B cell (primary cell): ENCODE measurements at regions of chr1 and their contacts with region 1.

Region 1: DNA sequence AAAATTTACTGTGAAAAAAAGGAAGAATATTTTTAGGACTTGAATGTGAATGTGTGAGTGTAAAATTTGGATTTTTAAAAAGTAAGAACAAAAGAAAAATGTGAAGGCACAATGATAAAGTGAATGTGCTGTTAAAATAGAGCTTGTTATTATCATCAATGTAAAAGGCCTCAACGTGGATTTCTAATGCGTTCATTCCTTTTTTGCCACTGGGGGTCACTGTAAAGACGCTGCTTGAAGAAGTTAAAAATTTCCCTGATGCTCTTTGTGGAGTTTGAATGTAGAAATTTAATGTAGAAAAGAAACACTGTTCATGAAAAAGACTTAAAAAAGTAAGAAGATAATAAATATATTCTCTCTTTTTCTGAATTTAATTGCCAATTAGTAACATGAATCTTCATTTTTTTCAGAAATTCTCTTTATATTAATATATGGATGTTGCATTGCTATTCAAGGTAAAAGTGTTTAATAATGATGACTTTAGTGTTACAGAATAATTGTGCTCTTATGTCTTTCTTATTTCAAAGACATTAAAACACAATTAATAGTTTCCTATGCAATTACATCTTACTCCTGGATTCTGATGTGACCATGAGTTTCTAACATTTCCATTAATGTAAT is 161.5 kb downstream of the DNM3 start:
- DNase-seq: peak; percentile 66
- ATAC-seq: peak; percentile 41
- H3K4me3 ChIP-seq: no peak overlapping the region
- H3K4me3 Mint-ChIP-seq: no peak overlapping the region
- H3K27ac ChIP-seq: no peak overlapping the region
- H3K27ac Mint-ChIP-seq: no peak overlapping the region
- H3K4me1 ChIP-seq: no peaks in the 10 kb centered on the region
- H3K4me1 Mint-ChIP-seq: no peaks in the 10 kb centered on the region
- H3K27me3 ChIP-seq: no peaks in the 10 kb centered on the region
- H3K27me3 Mint-ChIP-seq: no peaks in the 10 kb centered on the region
- CTCF ChIP-seq: peak; percentile 81

Region 2: DNA sequence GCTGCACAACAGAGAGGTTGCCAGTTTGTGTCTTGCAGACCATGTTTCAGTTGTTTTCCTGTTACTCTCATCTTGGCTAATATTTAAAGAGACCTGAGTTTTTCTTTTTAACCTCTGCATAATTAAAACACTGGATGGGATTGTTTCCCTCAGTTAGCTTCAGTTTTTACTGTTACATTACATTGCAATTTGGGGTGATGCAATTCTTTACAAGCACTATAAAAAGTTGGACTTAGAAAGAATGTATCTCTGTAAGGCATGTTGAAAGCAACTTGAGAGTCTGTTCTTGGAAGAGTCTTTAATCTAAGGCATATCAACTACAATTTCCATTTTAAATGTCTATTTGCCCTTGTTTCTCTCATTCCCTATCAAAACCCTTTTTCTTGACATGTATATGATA is 62.5 kb before region 1 on chr1:
- CTCF ChIA-PET with region 1: no interaction called
- POLR2A ChIA-PET with region 1: no interaction called
- intact Hi-C with region 1: no loop called
- DNase-seq: no peak
- ATAC-seq: no peak
- H3K4me3 ChIP-seq: no peak overlapping the region
- H3K4me3 Mint-ChIP-seq: no peak overlapping the region
- H3K27ac ChIP-seq: no peak overlapping the region
- H3K27ac Mint-ChIP-seq: no peak overlapping the region
- H3K4me1 ChIP-seq: no peaks in the 10 kb centered on the region
- H3K4me1 Mint-ChIP-seq: no peaks in the 10 kb centered on the region
- H3K27me3 ChIP-seq: no peaks in the 10 kb centered on the region
- H3K27me3 Mint-ChIP-seq: no peaks in the 10 kb centered on the region
- CTCF ChIP-seq: no peak

Region 3: GRCh38 chr1:171984850-171985485 is 17.9 kb before region 1 on chr1:
- CTCF ChIA-PET with region 1: interaction called, 41 read pairs
- POLR2A ChIA-PET with region 1: no interaction called
- intact Hi-C with region 1: no loop called
- DNase-seq: peak; percentile 49
- ATAC-seq: peak; percentile 41
- H3K4me3 ChIP-seq: no peak overlapping the region
- H3K4me3 Mint-ChIP-seq: no peak overlapping the region
- H3K27ac ChIP-seq: no peak overlapping the region
- H3K27ac Mint-ChIP-seq: no peak overlapping the region
- H3K4me1 ChIP-seq: no peaks in the 10 kb centered on the region
- H3K4me1 Mint-ChIP-seq: no peaks in the 10 kb centered on the region
- H3K27me3 ChIP-seq: no peaks in the 10 kb centered on the region
- H3K27me3 Mint-ChIP-seq: peaks cover 4% of the 10 kb centered on the region
- CTCF ChIP-seq: peak; percentile 75

Region 4: DNA sequence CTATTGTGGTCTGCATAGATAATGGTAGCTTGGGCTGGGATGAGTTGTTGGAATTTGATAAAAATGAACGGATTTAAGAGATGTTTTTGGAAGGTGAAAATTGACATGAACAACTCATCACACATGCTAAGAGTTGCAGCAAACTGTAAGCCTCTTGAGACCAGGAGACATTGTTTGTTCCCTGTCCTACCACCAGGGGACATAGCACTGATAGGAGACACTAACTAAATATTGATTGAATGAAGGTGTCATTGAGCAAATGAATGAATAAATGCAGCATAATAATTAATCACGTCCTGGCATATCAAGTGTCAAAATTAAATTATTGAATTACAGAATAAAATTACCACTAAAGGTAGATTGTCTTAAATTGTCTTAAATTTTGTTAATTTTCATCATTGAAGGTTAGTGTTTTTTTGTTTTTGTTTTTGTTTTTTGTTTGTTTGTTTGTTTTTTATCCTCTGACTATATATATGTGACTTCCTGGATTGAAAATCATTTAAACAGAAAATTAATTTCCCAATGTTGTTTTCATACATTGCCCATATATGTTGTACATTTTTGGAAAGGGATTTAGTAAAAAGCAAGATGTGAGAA is 132.3 kb after region 1 on chr1:
- CTCF ChIA-PET with region 1: interaction called, 3 read pairs
- POLR2A ChIA-PET with region 1: no interaction called
- intact Hi-C with region 1: loop called (anchors 1 kb)
- DNase-seq: peak; percentile 57
- ATAC-seq: no peak
- H3K4me3 ChIP-seq: no peak overlapping the region
- H3K4me3 Mint-ChIP-seq: no peak overlapping the region
- H3K27ac ChIP-seq: no peak overlapping the region
- H3K27ac Mint-ChIP-seq: no peak overlapping the region
- H3K4me1 ChIP-seq: no peaks in the 10 kb centered on the region
- H3K4me1 Mint-ChIP-seq: peaks cover 12% of the 10 kb centered on the region
- H3K27me3 ChIP-seq: no peaks in the 10 kb centered on the region
- H3K27me3 Mint-ChIP-seq: no peaks in the 10 kb centered on the region
- CTCF ChIP-seq: peak; percentile 82

Region 5: GRCh38 chr1:172443626-172444453 is 441.0 kb after region 1 on chr1 and contains the start of gene PIGC:
- CTCF ChIA-PET with region 1: interaction called, 39 read pairs
- POLR2A ChIA-PET with region 1: no interaction called
- intact Hi-C with region 1: loop called (anchors 1 kb)
- DNase-seq: peak; percentile 92
- ATAC-seq: peak; percentile 100
- H3K4me3 ChIP-seq: peak within 1 kb of the TSS; percentile 68 to 95 (median 93)
- H3K4me3 Mint-ChIP-seq: peak within 1 kb of the TSS; percentile 96
- H3K27ac ChIP-seq: peak within 1 kb of the TSS; percentile 77 to 86
- H3K27ac Mint-ChIP-seq: peak within 1 kb of the TSS; percentile 90
- H3K4me1 ChIP-seq: peaks cover 11 to 16% of the 10 kb centered on the region in 2 donors
- H3K4me1 Mint-ChIP-seq: peaks cover 37% of the 10 kb centered on the region
- H3K27me3 ChIP-seq: no peaks in the 10 kb centered on the region
- H3K27me3 Mint-ChIP-seq: no peaks in the 10 kb centered on the region
- CTCF ChIP-seq: peak; percentile 91
- total RNA-seq, gene PIGC: 28.8 TPM in 2 replicates